Activated CD4-positive, alpha-beta T cell treated with anti-CD3 and anti-CD28 coated beads, Interleukin-2, amount 10 ng/mL, durations not matched to agents 7 days and 5 days (primary cell): ENCODE measurements at regions of chrX and their contacts with region 1.

Region 1: DNA sequence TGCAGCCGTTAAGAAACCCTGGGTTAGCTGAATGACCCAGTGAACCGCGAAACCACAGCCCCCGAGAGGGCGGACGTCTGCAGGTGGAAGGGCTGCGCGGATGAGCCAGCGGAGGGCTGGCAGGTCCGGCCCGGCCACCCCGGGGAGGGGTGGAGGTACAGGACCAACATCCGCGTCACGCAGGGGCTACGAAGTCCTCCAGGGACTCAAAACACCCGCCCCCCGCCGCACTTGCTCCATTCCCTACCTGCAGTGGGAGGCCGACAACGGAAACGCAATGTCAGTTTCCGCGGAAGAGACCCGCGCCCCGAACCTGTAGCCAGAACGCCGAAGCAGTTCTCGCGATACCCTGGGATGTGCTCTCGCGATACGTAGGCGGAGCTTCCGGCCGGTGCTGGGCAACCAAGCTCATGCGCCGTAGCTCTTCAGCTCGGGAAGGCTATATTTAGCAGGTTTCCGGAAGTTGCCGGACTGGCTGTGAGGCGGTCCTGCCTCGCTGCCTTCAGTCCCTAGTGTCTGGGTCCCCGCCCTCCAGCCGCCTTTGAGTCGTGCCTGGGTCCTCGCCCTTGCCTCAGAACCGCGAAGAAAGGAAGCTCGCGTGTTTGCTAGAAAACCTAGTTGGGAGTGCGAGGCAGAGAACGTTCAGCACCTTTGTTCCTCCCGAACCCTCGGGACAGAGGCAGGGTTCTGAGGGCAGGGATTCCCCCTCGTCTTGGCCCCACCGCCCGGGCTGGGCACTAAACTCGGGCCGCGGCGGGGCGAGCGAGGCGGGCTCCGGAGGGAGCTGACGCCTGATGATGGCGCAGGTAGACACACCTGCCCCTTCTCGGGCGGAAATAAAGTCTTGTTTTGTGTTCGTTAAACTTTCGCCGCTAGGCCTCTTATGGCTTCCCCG is at the starts of genes OFD1 and TRAPPC2:
- DNase-seq: peak; percentile 92
- H3K4me3 Mint-ChIP-seq: peak within 1 kb of the TSS; percentile 87
- H3K27ac Mint-ChIP-seq: peak within 1 kb of the TSS; percentile 98
- H3K4me1 Mint-ChIP-seq: peaks cover 47% of the 10 kb centered on the region
- H3K27me3 Mint-ChIP-seq: no peaks in the 10 kb centered on the region
- total RNA-seq, gene OFD1: 32.5 to 35.0 TPM
- total RNA-seq, gene TRAPPC2: 20.2 to 22.2 TPM

Region 2: DNA sequence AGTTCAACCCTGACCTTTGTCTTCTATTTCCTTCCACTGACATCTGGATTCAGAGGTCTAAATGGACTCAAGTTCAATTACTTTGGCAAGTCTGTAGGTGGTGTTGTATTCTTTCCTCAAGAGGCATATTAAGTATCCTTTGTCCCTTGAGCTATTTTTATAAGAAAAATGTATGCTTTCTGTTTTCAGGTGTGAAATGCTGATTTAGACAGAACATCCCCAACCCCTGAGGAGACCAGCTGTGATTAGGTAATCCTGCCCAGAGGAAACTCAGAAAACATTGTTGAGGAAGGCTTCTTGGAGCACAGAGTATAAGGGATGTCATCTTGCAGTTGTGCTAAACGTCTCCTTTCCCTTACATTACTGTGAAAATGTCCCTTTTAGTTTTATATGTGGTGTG is 211.7 kb before region 1 on chrX:
- CTCF ChIA-PET with region 1: no interaction called
- POLR2A ChIA-PET with region 1: no interaction called
- DNase-seq: no peak
- H3K4me3 Mint-ChIP-seq: no peak overlapping the region
- H3K27ac Mint-ChIP-seq: no peak overlapping the region
- H3K4me1 Mint-ChIP-seq: no peaks in the 10 kb centered on the region
- H3K27me3 Mint-ChIP-seq: no peaks in the 10 kb centered on the region

Region 3: DNA sequence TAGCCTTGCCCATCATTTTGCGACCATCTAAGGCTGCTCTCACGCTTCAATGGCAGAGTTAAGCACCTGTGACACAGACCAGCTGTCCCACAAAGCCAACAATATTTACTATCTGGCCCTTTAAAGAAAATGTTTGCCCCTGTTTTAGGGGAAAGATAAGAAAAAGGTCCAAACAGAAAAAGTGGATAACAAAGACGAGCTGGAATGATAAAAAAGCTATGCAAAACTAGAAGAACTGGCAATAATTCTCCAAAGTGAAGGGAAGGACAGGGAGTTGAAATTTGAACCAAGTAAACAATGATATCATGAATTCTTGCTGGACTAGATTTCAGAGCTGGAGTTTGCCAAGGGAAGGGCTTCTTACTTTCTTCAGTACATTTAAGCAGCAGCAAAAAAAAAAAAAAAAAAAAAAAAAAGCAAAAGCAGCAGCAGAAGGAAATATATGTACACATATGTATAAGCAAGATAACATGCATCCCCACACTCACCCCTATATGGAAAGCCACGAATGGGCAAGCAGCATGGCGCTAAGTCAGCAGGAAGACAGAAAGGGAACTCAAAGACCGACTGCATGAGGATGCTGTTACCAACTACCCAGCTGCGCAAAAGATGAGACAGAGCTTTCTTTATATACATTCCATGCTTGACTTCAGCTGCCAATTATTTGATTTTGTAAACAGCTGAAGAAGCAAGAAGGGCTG is 12.6 kb before region 1 on chrX:
- CTCF ChIA-PET with region 1: interaction called, 10 read pairs
- POLR2A ChIA-PET with region 1: no interaction called
- DNase-seq: no peak
- H3K4me3 Mint-ChIP-seq: no peak overlapping the region
- H3K27ac Mint-ChIP-seq: no peak overlapping the region
- H3K4me1 Mint-ChIP-seq: peaks cover 65% of the 10 kb centered on the region
- H3K27me3 Mint-ChIP-seq: no peaks in the 10 kb centered on the region

Region 4: GRCh38 chrX:13750204-13750603 is 15.7 kb after region 1 on chrX:
- CTCF ChIA-PET with region 1: interaction called, 16 read pairs
- POLR2A ChIA-PET with region 1: no interaction called
- DNase-seq: peak; percentile 33
- H3K4me3 Mint-ChIP-seq: no peak overlapping the region
- H3K27ac Mint-ChIP-seq: no peak overlapping the region
- H3K4me1 Mint-ChIP-seq: peaks cover 30% of the 10 kb centered on the region
- H3K27me3 Mint-ChIP-seq: no peaks in the 10 kb centered on the region